ENCODE measurements at regions of chr6 and their contacts with region 1.

Region 1: DNA sequence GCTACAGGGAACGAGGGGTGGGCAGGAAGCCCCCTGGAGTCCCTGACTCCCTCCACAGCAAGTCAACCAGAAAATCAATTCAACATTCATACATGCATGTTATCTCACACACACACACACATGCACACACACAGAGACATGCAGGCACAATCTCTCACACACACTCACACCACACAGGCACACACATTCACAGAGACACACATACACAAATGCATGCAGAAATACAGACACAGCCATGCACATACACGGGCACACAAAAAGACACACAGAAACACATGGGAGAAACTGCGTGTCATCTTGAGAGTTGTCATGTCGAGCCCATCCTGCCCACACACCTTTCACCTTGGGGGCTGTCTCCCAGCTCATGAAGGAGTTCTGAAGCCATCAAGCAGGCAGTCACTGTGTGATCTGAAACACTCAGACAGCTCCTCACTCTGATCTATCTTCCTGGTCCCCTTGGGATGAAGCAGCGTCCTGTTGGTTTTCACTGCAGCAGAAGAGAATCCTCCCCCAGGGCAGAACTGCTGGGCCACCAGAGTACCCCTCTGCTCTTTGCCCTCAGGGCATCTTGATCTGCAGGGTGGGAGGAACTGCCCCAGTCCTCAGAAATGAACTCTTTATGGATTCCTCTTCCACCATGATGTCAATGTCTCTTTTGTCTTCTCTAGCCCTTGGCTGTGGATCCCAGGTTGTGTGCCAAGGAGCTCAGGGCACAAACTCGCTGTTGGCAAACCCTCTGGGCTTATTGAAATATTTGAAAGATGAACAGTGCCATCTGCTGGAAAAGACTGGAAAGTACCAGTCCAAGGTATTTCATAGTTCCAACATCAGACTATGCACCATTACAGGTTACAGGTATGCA is 8.8 kb downstream of the RAET1L start:
- DNase-seq: no peak
- ATAC-seq: peak; percentile 89
- H3K4me3 ChIP-seq: no peak overlapping the region
- H3K27ac ChIP-seq: no peak overlapping the region
- H3K4me1 ChIP-seq: no peaks in the 10 kb centered on the region
- H3K27me3 ChIP-seq: peaks cover 56% of the 10 kb centered on the region
- CTCF ChIP-seq: peak; percentile 76

Region 2: DNA sequence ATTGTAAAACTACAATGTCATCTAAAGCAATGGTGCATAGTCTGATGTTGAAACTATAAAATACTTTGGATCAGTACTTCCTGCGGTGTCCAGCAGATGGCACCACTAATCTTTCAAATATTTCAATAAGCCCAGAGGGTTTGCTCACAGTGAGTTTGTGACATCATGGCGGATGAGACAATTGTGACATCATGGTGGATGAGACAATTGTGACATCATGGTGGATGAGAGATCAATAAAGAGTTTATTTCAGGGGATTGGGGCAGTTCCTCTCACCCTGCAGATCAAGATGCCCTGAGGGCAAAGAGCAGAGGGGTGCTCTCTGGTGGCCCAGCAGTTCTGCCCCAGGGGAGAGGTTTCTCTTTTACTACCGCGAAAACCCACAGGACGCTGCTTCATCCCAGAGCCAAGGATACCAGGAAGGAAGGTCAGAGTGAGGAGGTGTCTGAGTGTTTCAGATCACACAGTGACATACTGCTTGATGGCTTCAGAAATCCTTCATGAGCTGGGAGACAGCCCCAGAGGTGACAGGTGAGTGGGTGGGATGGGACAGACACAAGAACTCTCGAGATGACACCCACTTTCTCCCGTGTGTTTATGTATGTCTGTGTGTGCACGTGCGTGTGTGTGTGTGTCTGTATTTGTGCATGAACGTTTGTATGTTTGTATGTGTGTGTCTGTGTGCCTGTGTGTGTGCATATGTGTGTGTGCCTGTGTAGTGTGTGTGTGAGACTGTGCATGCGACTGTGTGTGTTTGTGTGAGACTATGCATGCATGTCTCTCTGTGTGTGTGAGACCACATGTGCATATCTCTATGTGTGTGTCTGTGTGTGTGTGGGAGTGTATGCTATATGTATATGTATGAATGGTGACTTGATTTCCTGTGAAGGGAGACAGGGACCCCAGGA is 82.1 kb before region 1 on chr6:
- intact Hi-C with region 1: loop called (anchors 5 kb)
- DNase-seq: no peak
- ATAC-seq: peak; percentile 83
- H3K4me3 ChIP-seq: no peak overlapping the region
- H3K27ac ChIP-seq: no peak overlapping the region
- H3K4me1 ChIP-seq: peaks cover 12% of the 10 kb centered on the region
- H3K27me3 ChIP-seq: peaks cover 96% of the 10 kb centered on the region
- CTCF ChIP-seq: peak; percentile 86

Region 3: GRCh38 chr6:150068720-150069648 is 52.4 kb after region 1 on chr6 and contains the start of gene ULBP3:
- intact Hi-C with region 1: no loop called
- DNase-seq: peak; percentile 96
- ATAC-seq: peak; percentile 93
- H3K4me3 ChIP-seq: peak within 1 kb of the TSS; percentile 63
- H3K27ac ChIP-seq: peak within 1 kb of the TSS; percentile 34
- H3K4me1 ChIP-seq: peaks cover 4% of the 10 kb centered on the region
- H3K27me3 ChIP-seq: no peaks in the 10 kb centered on the region
- CTCF ChIP-seq: peak; percentile 54
- total RNA-seq, gene ULBP3: 3.8 TPM

Region 4: GRCh38 chr6:150134280-150134936 is 117.9 kb after region 1 on chr6:
- intact Hi-C with region 1: no loop called
- DNase-seq: no peak
- ATAC-seq: peak; percentile 63
- H3K4me3 ChIP-seq: no peak overlapping the region
- H3K27ac ChIP-seq: no peak overlapping the region
- H3K4me1 ChIP-seq: no peaks in the 10 kb centered on the region
- H3K27me3 ChIP-seq: peaks cover 4% of the 10 kb centered on the region
- CTCF ChIP-seq: no peak